Heart right ventricle (tissue), 16 donors: ENCODE measurements at regions of chr3 and their contacts with region 1.

Region 1: GRCh38 chr3:195259475-195260279 is 11.3 kb downstream of the XXYLT1 start:
- DNase-seq: peak; percentile 88 to 93
- ATAC-seq: peak; percentile 78 to 92 (median 86)
- H3K4me3 ChIP-seq: peak overlapping the region; percentile 47 to 84 (median 70)
- H3K27ac ChIP-seq: peak overlapping the region; percentile 74 to 98 (median 92)
- H3K4me1 ChIP-seq: peaks cover 15 to 44% (median 30%) of the 10 kb centered on the region in 9 donors
- H3K27me3 ChIP-seq: no peaks in the 10 kb centered on the region
- CTCF ChIP-seq: peak in 8 of 9 donors; percentile 37 to 99 (median 78)

Region 2: GRCh38 chr3:194782698-194783404 is 476.8 kb before region 1 on chr3:
- intact Hi-C with region 1: loop called in 1 of 10 experiments (anchors 5 kb)
- DNase-seq: no peak
- ATAC-seq: peak in 5 of 8 donors; percentile 36 to 68 (median 50)
- H3K4me3 ChIP-seq: no peak overlapping the region
- H3K27ac ChIP-seq: peak overlapping the region in 6 of 10 donors; percentile 7 to 63 (median 37)
- H3K4me1 ChIP-seq: peaks cover 11 to 46% (median 30%) of the 10 kb centered on the region in 9 donors
- H3K27me3 ChIP-seq: no peaks in the 10 kb centered on the region
- CTCF ChIP-seq: no peak

Region 3: GRCh38 chr3:194952841-194953241 is 306.8 kb before region 1 on chr3:
- intact Hi-C with region 1: no loop called
- DNase-seq: peak in 1 of 2 donors; percentile 48
- ATAC-seq: peak; percentile 52 to 84 (median 76)
- H3K4me3 ChIP-seq: no peak overlapping the region
- H3K27ac ChIP-seq: peak overlapping the region in 9 of 10 donors; percentile 24 to 81 (median 49)
- H3K4me1 ChIP-seq: peaks cover 7 to 47% (median 24%) of the 10 kb centered on the region in 9 donors
- H3K27me3 ChIP-seq: no peaks in the 10 kb centered on the region
- CTCF ChIP-seq: no peak

Region 4: GRCh38 chr3:195007766-195008165 is 251.9 kb before region 1 on chr3:
- intact Hi-C with region 1: loop called in 9 of 10 experiments (anchors 2 to 10 kb)
- DNase-seq: no peak
- ATAC-seq: no peak
- H3K4me3 ChIP-seq: no peak overlapping the region
- H3K27ac ChIP-seq: no peak overlapping the region
- H3K4me1 ChIP-seq: peaks cover 0 to 24% (median 6%) of the 10 kb centered on the region in 9 donors
- H3K27me3 ChIP-seq: no peaks in the 10 kb centered on the region
- CTCF ChIP-seq: no peak

Region 5: DNA sequence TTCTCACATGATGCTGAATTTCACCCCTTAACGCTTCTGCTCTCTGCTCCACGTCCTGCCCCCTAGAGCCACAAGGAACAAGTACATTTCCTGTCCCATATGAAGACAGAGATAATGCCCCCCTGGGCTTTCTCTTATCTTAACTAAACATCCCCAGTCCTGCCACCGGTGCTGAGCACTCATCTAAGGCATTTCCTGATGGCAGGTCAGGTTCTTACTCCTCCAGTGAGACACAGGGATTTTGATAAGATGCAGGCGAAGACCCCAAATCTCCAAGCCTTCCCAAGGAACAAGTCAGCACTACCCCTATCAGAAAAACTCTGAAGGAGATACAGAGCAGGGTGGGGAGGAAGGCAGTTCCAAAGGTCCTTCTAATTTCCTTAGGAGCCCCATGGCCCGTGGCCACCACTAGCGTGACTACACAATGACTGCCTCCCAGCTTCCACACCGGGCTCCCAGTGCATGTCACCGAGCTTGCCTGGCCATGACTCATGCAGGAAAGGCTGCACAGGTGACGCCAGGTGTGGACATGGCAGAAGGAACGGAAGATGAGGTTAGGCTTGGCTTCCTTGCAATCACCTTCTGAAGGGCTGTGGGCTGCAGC is 141.6 kb before region 1 on chr3:
- intact Hi-C with region 1: loop called in 7 of 10 experiments (anchors 5 to 10 kb)
- DNase-seq: no peak
- ATAC-seq: peak in 5 of 8 donors; percentile 19 to 45 (median 35)
- H3K4me3 ChIP-seq: no peak overlapping the region
- H3K27ac ChIP-seq: peak overlapping the region in 3 of 10 donors; percentile 16 to 40 (median 38)
- H3K4me1 ChIP-seq: peaks cover 3 to 45% (median 19%) of the 10 kb centered on the region in 9 donors
- H3K27me3 ChIP-seq: no peaks in the 10 kb centered on the region
- CTCF ChIP-seq: peak in 4 of 9 donors; percentile 16 to 42 (median 29)

Region 6: GRCh38 chr3:195147649-195148095 is 112.0 kb before region 1 on chr3:
- intact Hi-C with region 1: loop called in 3 of 10 experiments (anchors 5 to 10 kb)
- DNase-seq: peak; percentile 54 to 55
- ATAC-seq: peak in 7 of 8 donors; percentile 13 to 53 (median 25)
- H3K4me3 ChIP-seq: peak overlapping the region in 7 of 10 donors; percentile 13 to 46 (median 34)
- H3K27ac ChIP-seq: peak overlapping the region in 9 of 10 donors; percentile 51 to 92 (median 82)
- H3K4me1 ChIP-seq: peaks cover 12 to 67% (median 57%) of the 10 kb centered on the region in 9 donors
- H3K27me3 ChIP-seq: no peaks in the 10 kb centered on the region
- CTCF ChIP-seq: no peak